Activated CD8-positive, alpha-beta memory T cell treated with anti-CD3 and anti-CD28 coated beads, Interleukin-2, amount 10 ng/mL, durations not matched to agents 7 days and 5 days (primary cell): ENCODE measurements at regions of chr3 and their contacts with region 1.

Region 1: GRCh38 chr3:13461169-13462158 is 18.6 kb upstream of the HDAC11 start:
- DNase-seq: peak; percentile 87
- ATAC-seq: peak; percentile 96
- H3K4me3 Mint-ChIP-seq: no peak overlapping the region
- H3K27ac Mint-ChIP-seq: no peak overlapping the region
- H3K4me1 Mint-ChIP-seq: no peaks in the 10 kb centered on the region
- H3K27me3 Mint-ChIP-seq: peaks cover 28% of the 10 kb centered on the region

Region 2: DNA sequence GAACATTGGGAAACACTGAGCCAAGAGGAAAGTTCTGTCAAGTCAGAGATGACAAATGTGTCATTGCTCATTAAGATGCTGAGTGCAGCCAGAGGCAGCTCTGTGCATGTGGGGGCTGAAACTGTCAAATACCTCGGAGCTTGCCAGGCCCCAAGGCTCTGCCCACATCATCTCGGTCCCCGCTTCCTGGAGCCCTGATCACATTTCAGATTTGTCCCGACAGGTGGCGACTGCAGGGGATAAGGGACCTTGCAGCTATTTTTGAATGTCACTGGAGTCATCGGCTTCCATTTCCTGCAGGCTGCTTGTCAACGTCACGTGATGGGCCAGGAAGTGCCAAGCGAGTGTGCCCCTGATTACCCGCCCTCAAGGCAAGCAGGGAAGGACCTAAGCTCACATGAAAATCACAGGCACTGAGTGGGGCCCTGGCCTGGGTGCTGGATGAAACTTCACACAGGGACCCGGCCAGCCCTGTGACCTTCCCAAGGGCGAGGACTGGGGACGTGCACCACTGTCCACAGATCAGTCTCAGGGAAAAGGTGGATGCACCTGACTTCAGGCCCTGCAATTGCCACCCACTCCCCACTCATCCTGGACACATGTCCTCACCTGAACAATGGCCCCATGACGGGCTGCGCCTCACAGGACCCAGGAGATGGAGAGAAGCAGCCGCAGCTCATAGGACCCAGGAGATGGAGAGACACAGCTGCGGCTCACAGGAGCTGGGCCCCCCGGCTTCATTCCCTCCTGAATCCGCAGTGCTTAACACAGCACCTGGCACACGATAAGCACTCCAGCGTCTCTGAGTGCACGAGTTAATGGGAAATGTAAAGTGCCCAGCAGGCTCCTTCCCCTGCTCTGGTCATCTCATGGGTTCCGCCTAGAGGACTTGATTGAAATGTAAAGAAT is 114.7 kb before region 1 on chr3:
- CTCF ChIA-PET with region 1: interaction called, 54 read pairs
- DNase-seq: peak; percentile 82
- ATAC-seq: peak; percentile 82
- H3K4me3 Mint-ChIP-seq: no peak overlapping the region
- H3K27ac Mint-ChIP-seq: peak overlapping the region; percentile 48
- H3K4me1 Mint-ChIP-seq: peaks cover 55% of the 10 kb centered on the region
- H3K27me3 Mint-ChIP-seq: no peaks in the 10 kb centered on the region

Region 3: DNA sequence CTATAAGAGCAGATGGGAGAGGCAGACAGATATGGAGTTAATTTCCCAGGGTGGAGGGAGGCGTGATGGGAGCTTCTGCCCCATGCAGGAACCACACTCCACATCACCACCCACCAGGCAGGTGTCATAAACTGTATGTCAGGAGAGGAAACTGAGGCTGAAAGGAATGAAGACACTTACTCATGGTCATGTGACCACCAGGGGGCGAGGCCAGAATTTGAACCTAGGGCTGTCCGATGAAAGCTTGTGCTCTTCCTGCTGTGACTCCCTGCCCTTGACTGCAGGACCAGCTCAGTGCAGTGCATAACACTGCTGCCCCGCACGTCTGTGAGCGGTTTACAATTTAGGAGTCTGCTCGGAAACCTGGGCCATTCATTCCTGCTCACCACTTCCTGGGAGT is 70.2 kb before region 1 on chr3:
- CTCF ChIA-PET with region 1: interaction called, 12 read pairs
- DNase-seq: no peak
- ATAC-seq: no peak
- H3K4me3 Mint-ChIP-seq: no peak overlapping the region
- H3K27ac Mint-ChIP-seq: no peak overlapping the region
- H3K4me1 Mint-ChIP-seq: peaks cover 2% of the 10 kb centered on the region
- H3K27me3 Mint-ChIP-seq: no peaks in the 10 kb centered on the region

Region 4: GRCh38 chr3:13479581-13480339 is 18.3 kb after region 1 on chr3 and contains the start of gene HDAC11:
- CTCF ChIA-PET with region 1: interaction called, 17 read pairs
- DNase-seq: peak; percentile 99
- ATAC-seq: peak; percentile 96
- H3K4me3 Mint-ChIP-seq: peak within 1 kb of the TSS; percentile 83
- H3K27ac Mint-ChIP-seq: peak within 1 kb of the TSS; percentile 86
- H3K4me1 Mint-ChIP-seq: peaks cover 10% of the 10 kb centered on the region
- H3K27me3 Mint-ChIP-seq: peaks cover 11% of the 10 kb centered on the region
- total RNA-seq, gene HDAC11: 0.70 to 1.2 TPM

Region 5: GRCh38 chr3:13559764-13560525 is 98.5 kb after region 1 on chr3:
- CTCF ChIA-PET with region 1: no interaction called
- DNase-seq: no peak
- ATAC-seq: no peak
- H3K4me3 Mint-ChIP-seq: no peak overlapping the region
- H3K27ac Mint-ChIP-seq: no peak overlapping the region
- H3K4me1 Mint-ChIP-seq: peaks cover 7% of the 10 kb centered on the region
- H3K27me3 Mint-ChIP-seq: peaks cover 46% of the 10 kb centered on the region